GM13977 (cell line): ENCODE measurements at regions of chr1 and their contacts with region 1.

Region 1: DNA sequence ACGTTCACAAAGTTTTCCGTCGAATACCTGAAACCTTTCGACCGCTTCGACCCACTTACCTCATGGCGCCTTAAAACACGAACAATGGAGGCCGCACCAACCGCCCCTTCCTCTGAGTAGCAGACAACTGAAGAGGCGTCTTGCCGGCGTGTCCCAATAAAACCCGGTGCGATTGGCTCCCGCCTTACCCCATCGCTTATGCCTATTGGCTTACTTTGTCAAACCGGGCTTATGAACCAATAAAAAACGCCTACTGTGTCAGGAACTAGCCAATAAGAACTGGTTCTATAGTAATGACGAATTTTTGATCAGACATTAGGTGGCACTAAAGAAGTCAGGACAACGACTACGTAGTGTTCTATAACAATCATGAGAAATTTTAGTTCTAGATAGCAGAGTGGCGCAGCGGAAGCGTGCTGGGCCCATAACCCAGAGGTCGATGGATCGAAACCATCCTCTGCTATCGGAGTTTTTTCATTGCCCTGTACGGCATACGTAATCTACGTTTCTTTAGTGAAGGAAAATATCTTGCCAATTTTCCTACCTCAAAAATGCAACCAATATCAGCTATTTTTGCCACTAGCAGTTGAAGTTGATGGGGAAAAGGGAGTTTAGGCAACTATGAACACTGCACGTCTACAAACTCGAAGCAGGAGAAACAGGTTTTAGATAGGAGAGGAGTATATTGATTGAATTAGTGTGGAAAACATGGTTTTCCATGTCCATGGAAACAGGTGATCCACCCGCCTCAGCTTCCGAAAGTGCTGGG is at the start of gene ILF2:
- DNase-seq: peak; percentile 96
- CTCF ChIP-seq: peak; percentile 33

Region 2: GRCh38 chr1:152367434-152367833 is 1303.6 kb before region 1 on chr1:
- in situ Hi-C with region 1: no loop called
- DNase-seq: no peak
- CTCF ChIP-seq: no peak

Region 3: DNA sequence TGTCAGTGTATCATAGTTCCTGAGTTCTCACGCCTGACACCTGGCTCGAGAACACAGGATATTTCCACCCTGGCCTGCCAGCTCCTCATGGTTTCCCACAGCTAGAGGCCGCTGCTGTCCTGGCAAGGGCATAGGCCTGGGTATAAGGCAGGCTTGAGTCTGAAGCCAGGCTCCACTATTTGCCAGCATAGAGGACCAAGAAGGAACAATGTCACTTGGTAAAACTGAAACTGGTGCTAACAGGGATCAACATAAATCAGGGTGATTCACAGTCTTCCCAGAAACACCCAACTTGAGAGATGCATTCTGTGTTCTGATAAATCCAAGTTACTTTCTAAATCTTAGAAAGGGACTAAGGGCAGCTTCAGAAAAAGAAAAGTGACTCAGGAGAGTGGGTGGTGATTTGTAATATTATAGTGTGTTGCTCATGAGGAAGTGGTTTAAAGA is 98.5 kb before region 1 on chr1:
- in situ Hi-C with region 1: no loop called
- DNase-seq: peak; percentile 76
- CTCF ChIP-seq: peak; percentile 83

Region 4: DNA sequence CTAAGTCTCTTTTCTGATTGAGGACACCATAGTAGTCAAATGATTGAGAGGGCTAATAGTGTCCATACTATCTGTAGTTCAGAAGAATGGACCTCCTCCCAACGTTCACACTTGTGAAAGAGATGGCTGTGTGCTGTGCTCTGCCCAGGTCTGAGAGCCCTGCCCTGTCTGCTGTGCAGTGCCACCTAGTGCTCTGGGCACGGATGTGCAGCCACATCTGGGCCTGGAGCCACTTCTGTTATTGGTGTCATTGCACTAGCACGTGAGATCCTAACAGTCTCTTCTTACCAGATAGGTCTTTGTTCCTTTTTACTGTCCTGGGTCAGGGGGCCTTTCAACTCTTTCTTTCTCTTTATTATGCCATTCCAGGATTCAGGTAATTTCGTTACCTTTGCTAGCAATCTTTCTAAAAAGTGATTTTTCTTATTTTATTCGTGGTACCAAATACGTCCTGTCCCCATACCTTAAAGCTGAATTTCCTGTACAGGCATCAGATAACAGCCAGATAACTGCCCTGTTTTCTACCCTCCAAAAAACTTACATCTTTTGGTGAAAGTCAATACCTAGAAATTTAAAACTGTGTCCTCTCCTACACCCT is 78.5 kb after region 1 on chr1:
- in situ Hi-C with region 1: loop called (anchors 10 kb)
- DNase-seq: peak; percentile 84
- CTCF ChIP-seq: peak; percentile 98

Region 5: GRCh38 chr1:153783233-153784190 is 112.5 kb after region 1 on chr1:
- in situ Hi-C with region 1: no loop called
- DNase-seq: peak; percentile 98
- CTCF ChIP-seq: no peak

Region 6: DNA sequence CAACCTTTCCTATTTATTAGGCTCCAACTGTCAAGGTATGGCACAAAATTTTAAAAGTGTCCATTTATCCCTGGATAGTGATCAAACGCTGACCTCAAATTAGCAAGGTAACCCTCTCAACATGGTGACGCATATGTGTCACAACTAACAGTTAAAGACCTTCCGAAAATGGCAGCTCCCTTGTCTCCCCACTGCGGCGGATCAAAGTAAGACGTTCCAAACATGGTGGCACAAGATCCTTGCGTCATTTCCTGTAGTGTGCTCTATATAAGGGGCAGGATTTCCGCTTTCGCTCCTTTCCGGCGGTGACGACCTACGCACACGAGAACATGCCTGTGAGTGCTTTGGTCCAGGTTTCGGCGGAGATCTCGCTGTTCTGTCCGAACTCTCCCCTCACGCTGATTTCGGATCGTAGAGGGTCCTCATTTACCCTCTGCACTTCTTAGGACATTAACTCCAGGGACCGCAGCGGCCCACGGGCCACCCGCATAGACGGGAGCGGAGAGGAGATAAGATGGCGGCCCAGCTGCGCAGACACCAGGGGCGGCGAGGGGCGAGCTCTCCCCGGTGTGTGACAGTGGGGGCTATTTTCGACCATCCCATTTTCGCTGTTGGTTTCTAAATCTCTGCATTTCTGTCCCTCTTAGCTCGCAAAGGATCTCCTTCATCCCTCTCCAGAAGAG is 319.6 kb after region 1 on chr1 and contains the start of gene RPS27:
- in situ Hi-C with region 1: loop called (anchors 10 kb)
- DNase-seq: peak; percentile 95
- CTCF ChIP-seq: no peak